CD4-positive, alpha-beta T cell (primary cell): ENCODE measurements at regions of chr13 and their contacts with region 1.

Region 1: DNA sequence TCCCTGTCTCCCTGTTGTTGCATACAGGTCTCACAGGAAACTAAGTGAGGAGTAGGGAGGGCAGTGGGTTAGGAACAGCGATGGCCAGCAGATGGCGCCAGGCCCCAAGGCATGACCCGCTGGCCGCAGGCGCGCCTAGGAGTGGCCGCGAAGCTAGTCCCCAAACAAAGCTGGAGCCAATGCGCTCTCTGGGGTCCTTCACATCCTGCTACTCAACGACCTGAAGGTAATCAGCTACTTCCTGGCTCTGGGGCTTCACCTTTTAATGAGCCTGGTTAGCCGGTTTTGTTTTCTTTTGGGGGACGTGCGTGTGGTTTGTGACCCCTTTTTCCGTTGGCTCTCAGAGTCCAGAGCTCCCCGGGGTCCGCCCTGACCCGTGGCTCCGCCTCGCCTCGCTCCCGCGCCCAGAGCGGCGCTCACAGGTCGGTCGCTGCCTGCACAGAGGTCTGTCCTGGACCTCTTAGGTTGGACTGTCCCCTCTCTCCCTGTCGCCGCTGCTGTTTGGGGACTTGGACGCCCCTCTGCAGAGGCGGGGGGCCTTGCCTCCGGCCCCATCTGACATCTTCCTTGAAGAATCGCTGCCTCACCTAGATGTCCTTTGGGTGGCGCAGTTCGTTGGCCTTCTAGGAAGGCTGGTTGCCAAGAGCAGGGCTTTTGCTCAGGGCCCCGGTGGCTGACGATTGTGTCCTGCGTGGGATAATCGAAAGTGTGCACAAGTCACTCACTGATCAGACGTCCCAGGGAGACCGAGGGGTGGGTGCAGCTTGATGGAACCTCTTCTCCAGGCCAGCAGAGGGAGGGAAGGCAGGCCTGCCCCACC is 62.1 kb upstream of the GTF3A start:
- DNase-seq: peak; percentile 58 to 86 (median 70)
- ATAC-seq: peak; percentile 90
- H3K4me3 ChIP-seq: peak overlapping the region; percentile 33
- H3K4me3 Mint-ChIP-seq: peak overlapping the region; percentile 58
- H3K27ac ChIP-seq: no peak overlapping the region
- H3K27ac Mint-ChIP-seq: no peak overlapping the region
- H3K4me1 ChIP-seq: peaks cover 10% of the 10 kb centered on the region
- H3K4me1 Mint-ChIP-seq: peaks cover 4% of the 10 kb centered on the region
- H3K27me3 ChIP-seq: peaks cover 6 to 20% of the 10 kb centered on the region in 2 experiments
- H3K27me3 Mint-ChIP-seq: peaks cover 38% of the 10 kb centered on the region
- CTCF ChIP-seq: peak; percentile 86

Region 2: GRCh38 chr13:26985285-26985878 is 376.9 kb before region 1 on chr13:
- CTCF ChIA-PET with region 1: interaction called, 54 read pairs
- POLR2A ChIA-PET with region 1: interaction called, 10 read pairs
- intact Hi-C with region 1: loop called (anchors 1 kb)
- DNase-seq: peak; percentile 44 to 87 (median 60)
- ATAC-seq: peak; percentile 91
- H3K4me3 ChIP-seq: no peak overlapping the region
- H3K4me3 Mint-ChIP-seq: no peak overlapping the region
- H3K27ac ChIP-seq: no peak overlapping the region
- H3K27ac Mint-ChIP-seq: no peak overlapping the region
- H3K4me1 ChIP-seq: no peaks in the 10 kb centered on the region
- H3K4me1 Mint-ChIP-seq: no peaks in the 10 kb centered on the region
- H3K27me3 ChIP-seq: peaks cover 0 to 5% of the 10 kb centered on the region in 2 experiments
- H3K27me3 Mint-ChIP-seq: peaks cover 30% of the 10 kb centered on the region
- CTCF ChIP-seq: peak; percentile 92

Region 3: GRCh38 chr13:27270594-27271520 is 91.4 kb before region 1 on chr13 and contains the start of gene RASL11A:
- CTCF ChIA-PET with region 1: interaction called, 3 read pairs
- POLR2A ChIA-PET with region 1: no interaction called
- intact Hi-C with region 1: loop called in 1 of 2 experiments (anchors 5 kb)
- DNase-seq: peak; percentile 52 to 85 (median 68)
- ATAC-seq: peak; percentile 91
- H3K4me3 ChIP-seq: peak within 1 kb of the TSS; percentile 73
- H3K4me3 Mint-ChIP-seq: peak within 1 kb of the TSS; percentile 92
- H3K27ac ChIP-seq: no peak within 1 kb of the TSS
- H3K27ac Mint-ChIP-seq: peak within 1 kb of the TSS; percentile 68
- H3K4me1 ChIP-seq: peaks cover 17% of the 10 kb centered on the region
- H3K4me1 Mint-ChIP-seq: peaks cover 34% of the 10 kb centered on the region
- H3K27me3 ChIP-seq: peaks cover 5 to 8% of the 10 kb centered on the region in 2 experiments
- H3K27me3 Mint-ChIP-seq: peaks cover 14% of the 10 kb centered on the region
- CTCF ChIP-seq: peak; percentile 99
- total RNA-seq, gene RASL11A: 2.9 to 4.7 TPM

Region 4: GRCh38 chr13:27374650-27375049 is 12.4 kb after region 1 on chr13:
- CTCF ChIA-PET with region 1: interaction called, 10 read pairs
- POLR2A ChIA-PET with region 1: no interaction called
- intact Hi-C with region 1: no loop called
- DNase-seq: peak; percentile 19 to 80 (median 38)
- ATAC-seq: peak; percentile 82
- H3K4me3 ChIP-seq: no peak overlapping the region
- H3K4me3 Mint-ChIP-seq: no peak overlapping the region
- H3K27ac ChIP-seq: no peak overlapping the region
- H3K27ac Mint-ChIP-seq: no peak overlapping the region
- H3K4me1 ChIP-seq: peaks cover 3% of the 10 kb centered on the region
- H3K4me1 Mint-ChIP-seq: peaks cover 5% of the 10 kb centered on the region
- H3K27me3 ChIP-seq: peaks cover 5 to 7% of the 10 kb centered on the region in 2 experiments
- H3K27me3 Mint-ChIP-seq: peaks cover 34% of the 10 kb centered on the region
- CTCF ChIP-seq: peak; percentile 75

Region 5: DNA sequence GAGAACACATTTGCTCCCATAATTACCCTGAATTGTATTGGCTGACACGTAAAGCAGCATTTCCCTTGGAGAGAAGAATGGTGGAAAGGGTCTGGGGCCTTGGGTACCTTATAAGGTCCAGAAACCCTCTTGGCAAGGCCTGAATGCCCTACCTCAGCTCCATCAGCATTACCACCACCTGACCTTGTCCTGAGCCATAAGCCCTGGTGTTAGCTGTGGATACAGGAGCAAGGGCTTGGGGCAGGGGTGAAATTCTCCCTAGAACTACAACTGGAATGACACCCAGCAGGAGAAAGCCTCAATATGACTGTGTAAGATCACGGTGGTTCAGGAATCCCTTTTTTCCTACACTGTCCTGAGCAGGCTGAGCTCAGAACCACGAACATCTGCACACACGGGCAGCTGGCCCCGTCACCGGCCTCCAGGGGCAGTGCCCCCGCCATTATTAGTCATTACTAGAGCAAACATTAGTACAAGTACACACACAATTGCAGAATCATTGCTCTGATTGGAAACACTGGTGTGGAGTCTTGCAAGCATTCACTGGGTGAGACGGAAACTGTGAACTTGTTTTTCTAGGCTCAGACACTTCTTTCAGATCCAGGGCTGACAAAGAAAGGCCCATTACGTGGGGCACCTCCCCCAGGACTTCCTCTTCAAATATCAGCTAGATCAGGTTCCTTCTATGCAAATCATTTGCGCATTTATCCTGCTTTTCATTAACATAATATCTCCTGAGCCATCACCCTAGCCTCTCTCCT is 114.8 kb after region 1 on chr13:
- CTCF ChIA-PET with region 1: no interaction called
- POLR2A ChIA-PET with region 1: no interaction called
- intact Hi-C with region 1: no loop called
- DNase-seq: peak in 7 of 14 experiments; percentile 8 to 23 (median 18)
- ATAC-seq: peak; percentile 78
- H3K4me3 ChIP-seq: no peak overlapping the region
- H3K4me3 Mint-ChIP-seq: peak overlapping the region; percentile 75
- H3K27ac ChIP-seq: no peak overlapping the region
- H3K27ac Mint-ChIP-seq: peak overlapping the region; percentile 86
- H3K4me1 ChIP-seq: peaks cover 7% of the 10 kb centered on the region
- H3K4me1 Mint-ChIP-seq: peaks cover 44% of the 10 kb centered on the region
- H3K27me3 ChIP-seq: no peaks in the 10 kb centered on the region
- H3K27me3 Mint-ChIP-seq: no peaks in the 10 kb centered on the region
- CTCF ChIP-seq: no peak

Region 6: DNA sequence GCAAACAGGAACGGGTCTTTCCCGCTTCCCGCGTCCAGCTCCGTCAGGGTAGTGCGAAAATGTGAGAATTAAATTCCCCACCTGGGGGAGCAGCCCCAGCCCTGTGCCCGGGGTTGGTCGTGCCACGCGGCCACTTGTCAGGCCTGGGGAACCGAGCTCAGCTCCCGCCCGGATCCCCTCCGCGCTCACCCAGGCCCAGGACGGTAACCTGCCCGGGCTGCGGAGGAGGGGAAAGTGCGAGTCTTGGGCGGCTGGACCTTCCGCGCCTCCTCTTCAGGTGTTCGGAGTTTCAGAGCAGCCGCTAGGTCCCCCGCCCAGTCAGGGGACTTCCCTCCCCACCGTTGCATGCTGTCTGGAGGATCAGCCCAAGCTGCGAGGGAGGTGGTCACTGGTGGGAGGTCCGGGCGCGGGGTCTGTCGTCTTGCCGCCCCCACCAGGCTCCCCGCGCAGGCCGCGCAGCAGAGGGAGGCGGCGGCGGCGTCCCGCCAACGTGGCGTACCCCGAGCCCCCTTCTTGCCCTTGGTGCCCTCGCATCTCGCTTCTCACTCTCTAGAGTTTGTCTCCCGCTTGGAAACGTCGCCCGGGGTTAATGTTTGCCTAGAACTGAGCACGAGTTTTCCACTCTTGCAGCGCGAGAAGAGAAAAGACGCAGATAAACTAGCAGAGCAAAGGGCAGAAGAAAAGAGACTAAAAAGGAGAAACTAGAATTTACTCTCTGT is 618.2 kb after region 1 on chr13:
- CTCF ChIA-PET with region 1: interaction called, 17 read pairs
- POLR2A ChIA-PET with region 1: no interaction called
- intact Hi-C with region 1: loop called (anchors 1 kb)
- DNase-seq: no peak
- ATAC-seq: no peak
- H3K4me3 ChIP-seq: no peak overlapping the region
- H3K4me3 Mint-ChIP-seq: no peak overlapping the region
- H3K27ac ChIP-seq: no peak overlapping the region
- H3K27ac Mint-ChIP-seq: no peak overlapping the region
- H3K4me1 ChIP-seq: peaks cover 8% of the 10 kb centered on the region
- H3K4me1 Mint-ChIP-seq: peaks cover 13% of the 10 kb centered on the region
- H3K27me3 ChIP-seq: peaks cover 50 to 67% of the 10 kb centered on the region in 2 experiments
- H3K27me3 Mint-ChIP-seq: peaks cover 80% of the 10 kb centered on the region
- CTCF ChIP-seq: no peak

Region 7: DNA sequence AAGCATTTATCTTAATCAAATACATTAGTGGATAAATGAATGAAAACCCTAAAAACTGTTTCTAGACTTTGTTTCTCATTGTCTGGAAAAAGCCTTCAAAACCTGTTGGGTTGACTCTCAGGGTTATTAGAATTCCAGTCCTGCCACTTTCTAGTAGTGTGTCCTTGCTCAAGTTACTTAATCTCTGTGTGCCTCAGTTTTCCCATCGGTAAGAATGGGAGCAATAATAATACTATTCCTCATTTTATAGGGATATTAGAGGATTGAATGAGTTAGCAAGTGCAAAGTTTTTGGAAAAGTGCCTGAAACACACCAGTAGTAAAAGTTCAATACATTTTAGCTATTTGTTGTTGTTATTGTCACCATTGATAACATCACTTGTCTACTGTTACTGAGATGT is 623.3 kb after region 1 on chr13:
- CTCF ChIA-PET with region 1: interaction called, 17 read pairs
- POLR2A ChIA-PET with region 1: no interaction called
- intact Hi-C with region 1: loop called (anchors 1 kb)
- DNase-seq: no peak
- ATAC-seq: no peak
- H3K4me3 ChIP-seq: no peak overlapping the region
- H3K4me3 Mint-ChIP-seq: no peak overlapping the region
- H3K27ac ChIP-seq: no peak overlapping the region
- H3K27ac Mint-ChIP-seq: no peak overlapping the region
- H3K4me1 ChIP-seq: no peaks in the 10 kb centered on the region
- H3K4me1 Mint-ChIP-seq: no peaks in the 10 kb centered on the region
- H3K27me3 ChIP-seq: peaks cover 20 to 22% of the 10 kb centered on the region in 2 experiments
- H3K27me3 Mint-ChIP-seq: peaks cover 60% of the 10 kb centered on the region
- CTCF ChIP-seq: no peak

Region 8: DNA sequence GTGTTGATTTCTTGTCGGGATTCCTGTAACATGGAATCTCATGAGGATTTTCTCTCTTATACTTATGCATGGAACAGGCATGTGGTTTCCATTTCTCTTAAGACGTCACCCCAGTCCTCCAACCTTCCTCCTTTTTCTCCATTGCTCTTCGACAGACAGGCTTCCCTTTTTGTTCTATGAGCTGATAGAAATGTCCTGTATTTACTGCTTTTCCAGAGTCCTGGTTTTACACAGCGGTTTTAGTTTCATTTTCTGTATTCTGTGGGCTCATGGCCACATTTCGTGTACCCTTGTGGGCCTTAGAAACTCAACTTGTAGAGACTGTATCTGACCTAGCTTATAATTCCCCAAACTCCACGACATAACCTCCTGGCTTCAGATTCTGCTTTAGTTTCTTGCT is 889.2 kb after region 1 on chr13:
- CTCF ChIA-PET with region 1: no interaction called
- POLR2A ChIA-PET with region 1: no interaction called
- intact Hi-C with region 1: no loop called
- DNase-seq: no peak
- ATAC-seq: no peak
- H3K4me3 ChIP-seq: no peak overlapping the region
- H3K4me3 Mint-ChIP-seq: no peak overlapping the region
- H3K27ac ChIP-seq: no peak overlapping the region
- H3K27ac Mint-ChIP-seq: no peak overlapping the region
- H3K4me1 ChIP-seq: no peaks in the 10 kb centered on the region
- H3K4me1 Mint-ChIP-seq: peaks cover 84% of the 10 kb centered on the region
- H3K27me3 ChIP-seq: no peaks in the 10 kb centered on the region
- H3K27me3 Mint-ChIP-seq: no peaks in the 10 kb centered on the region
- CTCF ChIP-seq: no peak